ENCODE measurements at regions of chr15 and their contacts with region 1.

Region 1: GRCh38 chr15:75694241-75695182 is 18.1 kb downstream of the CSPG4 start:
- DNase-seq: peak; percentile 95
- H3K4me3 Mint-ChIP-seq: peak overlapping the region; percentile 18
- H3K27ac Mint-ChIP-seq: peak overlapping the region; percentile 59
- H3K4me1 Mint-ChIP-seq: peaks cover 49% of the 10 kb centered on the region
- H3K27me3 Mint-ChIP-seq: no peaks in the 10 kb centered on the region
- CTCF ChIP-seq: peak; percentile 46

Region 2: GRCh38 chr15:75723847-75724660 is 29.5 kb after region 1 on chr15:
- CTCF ChIA-PET with region 1: interaction called, 14 read pairs
- POLR2A ChIA-PET with region 1: interaction called, 6 read pairs
- intact Hi-C with region 1: loop called (anchors 5 kb)
- DNase-seq: peak; percentile 75
- H3K4me3 Mint-ChIP-seq: no peak overlapping the region
- H3K27ac Mint-ChIP-seq: peak overlapping the region; percentile 86
- H3K4me1 Mint-ChIP-seq: peaks cover 10% of the 10 kb centered on the region
- H3K27me3 Mint-ChIP-seq: no peaks in the 10 kb centered on the region
- CTCF ChIP-seq: no peak

Measured in MCF 10A (cell line).